A549 (cell line): ENCODE measurements at regions of chr3 and their contacts with region 1.

Region 1: GRCh38 chr3:88131695-88132094 is 18.1 kb upstream of the C3orf38 start:
- DNase-seq: no peak
- ATAC-seq: no peak
- H3K4me3 ChIP-seq: no peak overlapping the region
- H3K27ac ChIP-seq: no peak overlapping the region
- H3K4me1 ChIP-seq: no peaks in the 10 kb centered on the region
- CTCF ChIP-seq: no peak
- EP300 ChIP-seq: no peak
- POLR2A ChIP-seq: no peak
- RAD21 ChIP-seq: no peak

Region 2: GRCh38 chr3:87867001-87867400 is 264.7 kb before region 1 on chr3:
- CTCF ChIA-PET with region 1: no interaction called
- POLR2A ChIA-PET with region 1: no interaction called
- DNase-seq: no peak
- ATAC-seq: no peak
- H3K4me3 ChIP-seq: no peak overlapping the region
- H3K27ac ChIP-seq: no peak overlapping the region
- H3K4me1 ChIP-seq: peaks cover 6% of the 10 kb centered on the region; the same call in 2 of the 3 replicates
- CTCF ChIP-seq: no peak
- EP300 ChIP-seq: no peak
- POLR2A ChIP-seq: no peak
- RAD21 ChIP-seq: no peak

Region 3: GRCh38 chr3:88084097-88084501 is 47.6 kb before region 1 on chr3:
- CTCF ChIA-PET with region 1: no interaction called
- POLR2A ChIA-PET with region 1: no interaction called
- DNase-seq: no peak
- ATAC-seq: no peak
- H3K4me3 ChIP-seq: no peak overlapping the region
- H3K27ac ChIP-seq: no peak overlapping the region
- H3K4me1 ChIP-seq: no peaks in the 10 kb centered on the region
- CTCF ChIP-seq: no peak
- EP300 ChIP-seq: no peak
- POLR2A ChIP-seq: no peak
- RAD21 ChIP-seq: no peak

Region 4: GRCh38 chr3:88149509-88150362 is 18.0 kb after region 1 on chr3 and contains the start of gene C3orf38:
- CTCF ChIA-PET with region 1: interaction called, 11 read pairs
- POLR2A ChIA-PET with region 1: no interaction called
- DNase-seq: peak; percentile 85 to 97
- ATAC-seq: peak; percentile 97 to 99
- H3K4me3 ChIP-seq: peak within 1 kb of the TSS; percentile 68
- H3K27ac ChIP-seq: peak within 1 kb of the TSS; percentile 91 to 96
- H3K4me1 ChIP-seq: peaks cover 14% of the 10 kb centered on the region; the same call in 2 of the 3 replicates
- CTCF ChIP-seq: no peak
- EP300 ChIP-seq: no peak
- POLR2A ChIP-seq: peak; percentile 65
- RAD21 ChIP-seq: no peak
- polyA plus RNA-seq, gene C3orf38: 20.6 and 25.0 TPM in 2 replicates